KBM-7 (cell line): ENCODE measurements at regions of chr5 and their contacts with region 1.

Region 1: DNA sequence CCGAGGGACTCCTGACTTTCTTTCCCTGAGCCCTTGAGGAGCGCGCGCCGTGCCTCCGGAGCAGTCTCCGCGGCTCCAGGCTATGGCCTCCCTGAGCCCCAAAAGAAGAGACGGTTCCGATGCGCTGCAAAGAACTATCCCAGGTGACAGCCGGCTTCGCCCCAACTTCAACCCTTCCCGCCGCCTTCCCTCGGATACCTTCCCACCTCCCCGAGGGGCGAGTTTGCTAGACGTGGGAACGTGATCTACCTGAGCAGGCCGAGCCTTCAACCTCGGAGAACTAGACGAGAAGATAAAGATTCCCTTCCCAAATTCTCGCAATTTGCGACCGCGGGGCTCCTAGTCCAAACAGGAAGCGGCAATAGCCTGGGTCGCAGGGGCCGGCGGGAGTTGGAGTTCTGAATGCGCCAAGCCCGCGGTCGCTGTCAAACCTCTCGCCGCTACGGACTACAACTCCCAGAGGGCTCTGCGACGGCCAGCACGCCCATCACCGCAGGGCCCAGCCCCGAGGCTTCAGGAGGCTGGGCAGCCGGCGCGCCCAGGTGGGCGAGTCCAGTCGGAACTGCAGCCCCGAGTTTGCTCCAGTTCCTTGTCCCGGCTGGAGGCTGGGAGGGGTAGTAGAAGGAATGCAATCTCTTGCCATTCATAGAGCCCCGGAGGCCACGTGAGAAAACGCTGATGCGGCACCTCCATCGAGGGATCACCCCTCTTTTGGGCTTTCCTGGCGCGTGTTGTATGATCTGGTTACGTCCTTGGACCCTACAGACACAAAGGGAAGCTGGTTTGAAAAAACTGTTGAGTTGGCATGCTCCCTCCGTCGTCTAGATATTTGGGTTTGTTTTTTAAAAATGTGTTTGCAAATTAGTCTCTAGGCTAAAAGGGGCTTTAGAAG is at the start of gene SLC38A9:
- DNase-seq: peak; percentile 96

Region 2: GRCh38 chr5:56200856-56201666 is 488.8 kb after region 1 on chr5:
- in situ Hi-C with region 1: loop called (anchors 25 kb)
- DNase-seq: peak; percentile 77